GM12878 (cell line): ENCODE measurements at regions of chr7 and their contacts with region 1.

Region 1: DNA sequence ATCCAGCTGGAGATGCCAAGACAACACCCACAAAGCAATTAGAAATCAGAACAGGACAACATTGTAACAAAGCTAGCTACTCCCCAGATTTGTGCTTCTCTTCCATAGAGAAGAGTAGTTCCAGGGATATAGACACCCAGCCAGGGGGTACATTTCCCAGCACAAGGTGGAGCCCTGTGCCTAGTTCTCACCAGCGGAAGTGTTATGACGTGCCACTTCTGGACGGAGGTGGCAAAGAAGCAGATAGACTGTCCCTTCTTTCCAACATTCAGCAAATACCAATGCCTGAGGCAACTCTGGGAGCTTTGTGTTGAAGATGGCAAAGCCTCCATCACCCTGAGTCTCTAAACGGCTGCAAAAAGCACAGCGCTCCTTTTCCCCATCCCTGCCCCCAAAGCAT is 23.4 kb upstream of the GSAP start:
- DNase-seq: no peak
- ATAC-seq: no peak
- H3K4me3 ChIP-seq: no peak overlapping the region
- H3K27ac ChIP-seq: no peak overlapping the region
- H3K4me1 ChIP-seq: no peaks in the 10 kb centered on the region
- H3K27me3 ChIP-seq: no peaks in the 10 kb centered on the region
- CTCF ChIP-seq: no peak
- EP300 ChIP-seq: no peak
- POLR2A ChIP-seq: no peak
- RAD21 ChIP-seq: 0 out of 2 replicates have a peak, but pooled peaks have one; percentile 21

Region 2: DNA sequence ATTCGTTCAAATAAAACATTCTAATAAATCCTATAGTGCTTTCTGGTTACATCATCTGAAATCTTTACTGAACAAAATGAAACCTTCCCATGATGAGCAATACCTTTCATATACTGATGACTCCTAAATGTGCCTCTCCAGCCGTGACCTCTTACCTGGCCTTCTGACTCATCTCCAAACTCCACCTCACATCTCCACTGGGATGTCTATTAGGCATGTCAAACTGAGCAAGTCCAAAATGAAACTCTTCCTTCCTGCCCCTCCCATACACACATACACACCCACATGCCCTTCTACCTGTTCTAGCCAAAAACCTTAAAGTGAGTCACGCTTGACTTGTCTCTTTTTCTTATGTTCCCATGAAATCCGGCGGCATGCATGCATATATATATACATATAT is 46.3 kb before region 1 on chr7:
- CTCF ChIA-PET with region 1: no interaction called
- POLR2A ChIA-PET with region 1: no interaction called
- RAD21 ChIA-PET with region 1: no interaction called
- SMC1A ChIA-PET with region 1: no interaction called
- in situ Hi-C with region 1: no loop called
- intact Hi-C with region 1: no loop called
- DNase-seq: peak; percentile 85
- ATAC-seq: peak; percentile 92
- H3K4me3 ChIP-seq: no peak overlapping the region
- H3K27ac ChIP-seq: peak overlapping the region; percentile 72
- H3K4me1 ChIP-seq: peaks cover 30% of the 10 kb centered on the region
- H3K27me3 ChIP-seq: no peaks in the 10 kb centered on the region
- CTCF ChIP-seq: no peak
- EP300 ChIP-seq: peak in 1 of 2 experiments; percentile 70; a peak in 2 of 4 replicates
- POLR2A ChIP-seq: no peak
- RAD21 ChIP-seq: 0 out of 2 replicates have a peak, but pooled peaks have one; percentile 3

Region 3: DNA sequence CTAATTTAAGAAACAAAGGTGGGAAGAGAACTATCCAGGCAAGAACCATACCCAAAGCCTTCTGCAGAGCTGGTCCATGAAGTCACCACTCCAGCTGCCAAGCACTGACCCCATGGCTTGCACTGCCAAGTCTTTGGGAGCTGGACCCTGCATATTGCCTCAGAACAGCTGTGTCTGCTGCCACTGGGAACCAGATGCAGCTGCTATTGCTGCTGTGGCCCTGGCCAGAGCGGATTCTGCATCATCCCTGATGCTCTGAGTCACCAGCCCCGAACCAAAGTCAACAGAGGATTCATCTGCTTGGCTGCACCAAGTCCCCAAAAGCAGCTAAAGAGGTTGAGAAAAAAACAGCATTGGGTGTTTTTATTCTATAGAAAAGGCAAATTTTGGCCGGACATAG is 15.8 kb after region 1 on chr7:
- CTCF ChIA-PET with region 1: interaction called, 4 read pairs
- POLR2A ChIA-PET with region 1: interaction called, 4 read pairs
- RAD21 ChIA-PET with region 1: no interaction called
- SMC1A ChIA-PET with region 1: interaction called, 21 read pairs
- in situ Hi-C with region 1: no loop called
- intact Hi-C with region 1: no loop called
- DNase-seq: no peak
- ATAC-seq: no peak
- H3K4me3 ChIP-seq: no peak overlapping the region
- H3K27ac ChIP-seq: no peak overlapping the region
- H3K4me1 ChIP-seq: 0 out of 2 replicates have a peak, but pooled peaks cover 3% of the 10 kb centered on the region
- H3K27me3 ChIP-seq: no peaks in the 10 kb centered on the region
- CTCF ChIP-seq: no peak
- EP300 ChIP-seq: no peak
- POLR2A ChIP-seq: no peak
- RAD21 ChIP-seq: no peak